Natural killer cell (primary cell): ENCODE measurements at regions of chr6 and their contacts with region 1.

Region 1: GRCh38 chr6:31739639-31740396 is at the start of gene MSH5:
- DNase-seq: peak; percentile 95 to 97
- ATAC-seq: peak; percentile 74 to 95 (median 89)
- H3K4me3 ChIP-seq: peak within 1 kb of the TSS; percentile 66
- H3K4me3 Mint-ChIP-seq: peak within 1 kb of the TSS; percentile 97
- H3K27ac ChIP-seq: peak within 1 kb of the TSS; percentile 83
- H3K27ac Mint-ChIP-seq: peak within 1 kb of the TSS; percentile 91 to 99
- H3K4me1 ChIP-seq: peaks cover 44% of the 10 kb centered on the region
- H3K4me1 Mint-ChIP-seq: peaks cover 60 to 71% of the 10 kb centered on the region in 2 donors
- H3K27me3 ChIP-seq: no peaks in the 10 kb centered on the region
- H3K27me3 Mint-ChIP-seq: no peaks in the 10 kb centered on the region
- CTCF ChIP-seq: no peak
- total RNA-seq, gene MSH5: 28.2 to 44.6 (median 43.7) TPM

Region 2: GRCh38 chr6:31541658-31542521 is 197.9 kb before region 1 on chr6 and contains the start of gene DDX39B:
- intact Hi-C with region 1: loop called (anchors 10 kb)
- DNase-seq: peak; percentile 85 to 99
- ATAC-seq: peak; percentile 69 to 86 (median 77)
- H3K4me3 ChIP-seq: peak within 1 kb of the TSS; percentile 77
- H3K4me3 Mint-ChIP-seq: peak within 1 kb of the TSS; percentile 99
- H3K27ac ChIP-seq: peak within 1 kb of the TSS; percentile 92
- H3K27ac Mint-ChIP-seq: peak within 1 kb of the TSS; percentile 94 to 96
- H3K4me1 ChIP-seq: peaks cover 36% of the 10 kb centered on the region
- H3K4me1 Mint-ChIP-seq: peaks cover 49 to 56% of the 10 kb centered on the region in 2 donors
- H3K27me3 ChIP-seq: no peaks in the 10 kb centered on the region
- H3K27me3 Mint-ChIP-seq: no peaks in the 10 kb centered on the region
- CTCF ChIP-seq: no peak
- total RNA-seq, gene DDX39B: 506 to 571 (median 534) TPM

Region 3: DNA sequence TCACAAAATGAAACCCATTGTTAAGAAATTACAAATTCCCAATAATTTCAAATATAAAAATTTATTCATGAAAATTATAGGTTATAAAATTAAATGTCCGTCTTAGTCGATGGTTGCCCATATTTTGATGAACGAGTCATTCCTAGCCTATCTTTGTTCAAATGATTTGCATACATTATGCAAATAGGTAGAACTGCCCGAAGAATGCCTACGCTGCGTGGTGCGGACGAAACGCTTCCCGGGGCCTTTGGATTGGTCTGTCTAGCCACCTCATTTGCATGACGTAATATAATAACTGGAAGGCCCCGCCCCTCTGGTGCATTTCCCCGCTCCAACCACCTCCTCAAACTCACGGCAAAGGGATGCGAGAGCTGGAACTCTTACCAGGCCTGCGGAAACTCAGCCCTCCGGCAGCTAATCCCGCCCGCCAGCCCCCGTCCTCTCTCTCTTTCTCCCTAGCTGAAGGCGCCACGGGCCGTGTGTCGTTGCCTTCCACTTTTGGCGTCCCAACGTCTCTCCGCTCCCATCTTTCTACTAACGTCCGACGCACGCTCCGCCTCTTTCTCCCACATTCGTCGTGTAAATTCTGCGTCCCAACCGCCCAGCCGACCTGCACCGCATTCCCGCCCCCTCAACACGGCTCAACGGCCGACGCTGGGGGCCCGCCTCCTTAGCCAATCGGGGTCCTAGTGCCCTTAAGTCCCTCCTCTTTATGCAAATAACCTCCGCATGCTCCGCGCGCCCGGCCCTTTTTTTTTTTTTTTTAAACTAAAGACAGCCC is 119.8 kb before region 1 on chr6:
- intact Hi-C with region 1: loop called (anchors 5 kb)
- DNase-seq: peak; percentile 93 to 99
- ATAC-seq: peak; percentile 80 to 94 (median 84)
- H3K4me3 ChIP-seq: peak overlapping the region; percentile 91
- H3K4me3 Mint-ChIP-seq: peak overlapping the region; percentile 92
- H3K27ac ChIP-seq: peak overlapping the region; percentile 98
- H3K27ac Mint-ChIP-seq: peak overlapping the region; percentile 92 to 95
- H3K4me1 ChIP-seq: peaks cover 29% of the 10 kb centered on the region
- H3K4me1 Mint-ChIP-seq: peaks cover 20 to 25% of the 10 kb centered on the region in 2 donors
- H3K27me3 ChIP-seq: no peaks in the 10 kb centered on the region
- H3K27me3 Mint-ChIP-seq: no peaks in the 10 kb centered on the region
- CTCF ChIP-seq: no peak

Region 4: GRCh38 chr6:31652925-31653718 is 86.7 kb before region 1 on chr6:
- intact Hi-C with region 1: loop called (anchors 5 kb)
- DNase-seq: no peak
- ATAC-seq: peak; percentile 72 to 84 (median 73)
- H3K4me3 ChIP-seq: peak overlapping the region; percentile 90
- H3K4me3 Mint-ChIP-seq: peak overlapping the region; percentile 95
- H3K27ac ChIP-seq: peak overlapping the region; percentile 99
- H3K27ac Mint-ChIP-seq: peak overlapping the region; percentile 95 to 96
- H3K4me1 ChIP-seq: peaks cover 32% of the 10 kb centered on the region
- H3K4me1 Mint-ChIP-seq: peaks cover 49 to 60% of the 10 kb centered on the region in 2 donors
- H3K27me3 ChIP-seq: no peaks in the 10 kb centered on the region
- H3K27me3 Mint-ChIP-seq: no peaks in the 10 kb centered on the region
- CTCF ChIP-seq: no peak

Region 5: GRCh38 chr6:31680840-31681671 is 58.8 kb before region 1 on chr6 and contains the start of gene LY6G5C:
- intact Hi-C with region 1: loop called (anchors 5 kb)
- DNase-seq: peak; percentile 58 to 80
- ATAC-seq: peak; percentile 83 to 89 (median 86)
- H3K4me3 ChIP-seq: peak within 1 kb of the TSS; percentile 56
- H3K4me3 Mint-ChIP-seq: peak within 1 kb of the TSS; percentile 93
- H3K27ac ChIP-seq: peak within 1 kb of the TSS; percentile 14
- H3K27ac Mint-ChIP-seq: peak within 1 kb of the TSS; percentile 78 to 79
- H3K4me1 ChIP-seq: peaks cover 30% of the 10 kb centered on the region
- H3K4me1 Mint-ChIP-seq: peaks cover 19 to 23% of the 10 kb centered on the region in 2 donors
- H3K27me3 ChIP-seq: no peaks in the 10 kb centered on the region
- H3K27me3 Mint-ChIP-seq: peaks cover 0 to 3% of the 10 kb centered on the region in 2 donors
- CTCF ChIP-seq: peak; percentile 64
- total RNA-seq, gene LY6G5C: 2.0 to 7.9 (median 2.7) TPM

Region 6: GRCh38 chr6:31702819-31703522 is 36.8 kb before region 1 on chr6 and contains the start of gene ABHD16A:
- intact Hi-C with region 1: loop called (anchors 1 kb)
- DNase-seq: peak; percentile 97 to 99
- ATAC-seq: peak; percentile 93 to 97 (median 95)
- H3K4me3 ChIP-seq: peak within 1 kb of the TSS; percentile 80
- H3K4me3 Mint-ChIP-seq: peak within 1 kb of the TSS; percentile 99
- H3K27ac ChIP-seq: peak within 1 kb of the TSS; percentile 98
- H3K27ac Mint-ChIP-seq: peak within 1 kb of the TSS; percentile 96 to 98
- H3K4me1 ChIP-seq: peaks cover 28% of the 10 kb centered on the region
- H3K4me1 Mint-ChIP-seq: peaks cover 24 to 27% of the 10 kb centered on the region in 2 donors
- H3K27me3 ChIP-seq: no peaks in the 10 kb centered on the region
- H3K27me3 Mint-ChIP-seq: no peaks in the 10 kb centered on the region
- CTCF ChIP-seq: no peak
- total RNA-seq, gene ABHD16A: 92.0 to 97.6 (median 94.2) TPM